Activated CD4-positive, alpha-beta memory T cell treated with anti-CD3 and anti-CD28 coated beads, Interleukin-2, amount 10 ng/mL, durations not matched to agents 7 days and 5 days (primary cell): ENCODE measurements at regions of chr7 and their contacts with region 1.

Region 1: DNA sequence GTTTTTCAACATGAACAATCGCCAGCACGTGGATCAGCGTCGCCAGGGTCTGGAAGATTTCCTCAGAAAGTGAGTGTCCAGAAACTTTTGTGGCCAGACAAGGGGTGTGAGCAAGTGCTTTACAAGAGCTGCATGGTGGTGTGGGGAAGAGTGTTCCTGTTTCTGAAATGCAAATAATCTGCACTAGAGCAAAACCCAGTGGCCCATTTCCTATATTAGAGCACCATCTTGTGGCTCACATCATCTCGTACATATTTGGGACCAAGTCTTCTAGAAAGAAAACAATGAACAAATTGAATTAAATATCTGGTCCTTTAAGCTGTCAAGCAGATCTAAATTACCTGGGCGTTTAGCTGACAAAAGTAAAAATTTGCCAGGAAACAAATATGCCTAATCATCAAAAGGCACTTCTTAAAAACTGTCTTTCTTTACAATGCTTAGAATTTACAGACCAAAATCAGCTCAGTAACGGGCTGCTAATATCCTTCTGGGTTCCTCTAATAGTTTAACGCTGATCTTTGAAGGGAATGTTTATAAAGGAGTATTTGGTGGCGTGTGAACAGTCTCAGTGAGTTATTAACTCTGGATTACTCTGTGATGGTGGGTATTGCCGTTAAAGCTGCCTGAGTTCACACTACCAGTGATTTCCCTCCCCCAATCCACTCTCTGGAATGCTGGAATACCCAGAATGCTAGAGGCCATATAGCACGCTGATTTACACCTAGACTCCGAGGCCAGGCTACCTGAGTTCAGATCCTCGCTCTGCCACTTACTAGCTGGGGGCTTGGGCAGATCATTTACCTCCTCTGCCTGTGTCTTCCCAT is 73.6 kb downstream of the SNX10 start:
- DNase-seq: peak; percentile 58
- H3K4me3 Mint-ChIP-seq: no peak overlapping the region
- H3K27ac Mint-ChIP-seq: no peak overlapping the region
- H3K4me1 Mint-ChIP-seq: peaks cover 17% of the 10 kb centered on the region
- H3K27me3 Mint-ChIP-seq: no peaks in the 10 kb centered on the region

Region 2: GRCh38 chr7:26078437-26079336 is 286.6 kb before region 1 on chr7:
- CTCF ChIA-PET with region 1: interaction called, 15 read pairs
- POLR2A ChIA-PET with region 1: no interaction called
- DNase-seq: peak; percentile 73
- H3K4me3 Mint-ChIP-seq: no peak overlapping the region
- H3K27ac Mint-ChIP-seq: no peak overlapping the region
- H3K4me1 Mint-ChIP-seq: peaks cover 5% of the 10 kb centered on the region
- H3K27me3 Mint-ChIP-seq: peaks cover 71% of the 10 kb centered on the region

Region 3: DNA sequence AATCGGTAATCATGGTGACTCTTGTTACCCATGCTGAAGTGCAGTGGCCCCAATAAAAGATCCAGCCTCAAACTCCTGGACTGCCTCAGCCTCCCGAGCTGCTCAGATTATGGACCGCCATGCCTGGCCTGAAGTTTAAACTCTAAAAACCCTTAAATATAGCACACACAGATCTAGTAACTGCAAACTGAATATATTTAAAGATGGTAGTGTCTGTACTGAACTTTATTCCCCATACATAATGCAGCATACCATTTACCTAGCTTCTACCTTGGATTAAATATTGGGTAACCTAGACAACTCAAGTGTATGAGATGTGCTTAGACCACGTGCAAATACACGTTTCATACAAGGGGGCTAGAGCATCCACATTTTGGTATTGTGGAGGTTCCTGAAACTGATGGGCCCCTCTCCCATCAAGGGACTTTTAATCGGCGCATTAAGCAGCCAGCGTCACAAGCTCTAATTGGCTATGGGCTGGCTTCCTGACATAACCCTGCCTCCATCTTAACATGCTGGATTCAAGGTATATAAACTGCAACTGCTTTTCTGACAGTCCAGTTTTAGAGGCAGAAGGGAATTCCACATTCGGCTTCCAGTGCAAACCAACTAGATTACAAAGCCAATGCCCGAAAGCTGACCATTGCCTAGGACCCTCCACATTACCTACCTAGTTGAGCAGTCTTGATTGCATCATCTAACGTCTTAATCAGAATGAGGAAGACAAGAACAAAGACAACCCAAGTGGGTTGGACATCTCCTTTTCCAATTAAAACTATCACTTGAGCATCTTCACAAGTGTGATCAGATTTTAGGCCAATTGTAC is 177.7 kb before region 1 on chr7:
- CTCF ChIA-PET with region 1: interaction called, 20 read pairs
- POLR2A ChIA-PET with region 1: interaction called, 12 read pairs
- DNase-seq: no peak
- H3K4me3 Mint-ChIP-seq: no peak overlapping the region
- H3K27ac Mint-ChIP-seq: peak overlapping the region; percentile 63
- H3K4me1 Mint-ChIP-seq: peaks cover 78% of the 10 kb centered on the region
- H3K27me3 Mint-ChIP-seq: no peaks in the 10 kb centered on the region

Region 4: DNA sequence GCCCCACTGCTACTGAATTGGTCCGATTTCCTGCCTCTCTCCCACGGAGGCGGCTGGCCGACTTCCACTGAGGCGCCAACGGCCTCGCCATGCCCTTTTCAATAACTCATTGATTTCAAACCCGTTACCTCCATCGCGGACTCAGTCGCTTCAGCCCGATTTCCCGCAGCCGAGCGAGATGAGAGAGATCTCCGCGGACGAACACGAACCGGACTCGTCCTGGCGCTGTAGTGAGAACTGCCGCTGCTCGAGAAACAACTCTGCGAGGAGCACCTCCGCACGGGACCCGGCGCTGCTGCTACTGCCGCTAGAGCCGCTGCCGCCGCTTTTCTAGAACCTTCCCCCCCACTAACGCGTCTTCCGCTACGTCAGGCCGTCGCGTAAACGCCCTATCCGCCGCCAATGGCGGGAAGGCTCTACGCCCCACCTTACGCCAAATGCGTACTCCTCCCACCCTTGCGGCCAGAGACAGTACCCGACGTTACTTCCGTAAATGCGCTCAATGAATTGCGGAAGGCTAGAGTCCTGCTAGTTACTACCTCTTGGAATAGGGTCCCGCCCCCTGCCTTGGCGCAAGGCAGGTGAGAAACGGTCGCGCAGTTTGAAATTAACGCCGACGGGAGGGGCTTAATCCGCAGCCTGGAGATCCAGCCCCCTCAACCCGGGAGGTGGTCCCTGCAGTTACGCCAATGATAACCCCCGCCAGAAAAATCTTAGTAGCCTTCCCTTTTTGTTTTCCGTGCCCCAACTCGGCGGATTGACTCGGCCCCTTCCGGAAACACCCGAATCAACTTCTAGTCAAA is 164.6 kb before region 1 on chr7 and contains the start of gene HNRNPA2B1:
- CTCF ChIA-PET with region 1: interaction called, 18 read pairs
- POLR2A ChIA-PET with region 1: interaction called, 17 read pairs
- DNase-seq: peak; percentile 98
- H3K4me3 Mint-ChIP-seq: peak within 1 kb of the TSS; percentile 94
- H3K27ac Mint-ChIP-seq: peak within 1 kb of the TSS; percentile 98
- H3K4me1 Mint-ChIP-seq: peaks cover 41% of the 10 kb centered on the region
- H3K27me3 Mint-ChIP-seq: no peaks in the 10 kb centered on the region
- total RNA-seq, gene HNRNPA2B1: 696 to 705 TPM

Region 5: DNA sequence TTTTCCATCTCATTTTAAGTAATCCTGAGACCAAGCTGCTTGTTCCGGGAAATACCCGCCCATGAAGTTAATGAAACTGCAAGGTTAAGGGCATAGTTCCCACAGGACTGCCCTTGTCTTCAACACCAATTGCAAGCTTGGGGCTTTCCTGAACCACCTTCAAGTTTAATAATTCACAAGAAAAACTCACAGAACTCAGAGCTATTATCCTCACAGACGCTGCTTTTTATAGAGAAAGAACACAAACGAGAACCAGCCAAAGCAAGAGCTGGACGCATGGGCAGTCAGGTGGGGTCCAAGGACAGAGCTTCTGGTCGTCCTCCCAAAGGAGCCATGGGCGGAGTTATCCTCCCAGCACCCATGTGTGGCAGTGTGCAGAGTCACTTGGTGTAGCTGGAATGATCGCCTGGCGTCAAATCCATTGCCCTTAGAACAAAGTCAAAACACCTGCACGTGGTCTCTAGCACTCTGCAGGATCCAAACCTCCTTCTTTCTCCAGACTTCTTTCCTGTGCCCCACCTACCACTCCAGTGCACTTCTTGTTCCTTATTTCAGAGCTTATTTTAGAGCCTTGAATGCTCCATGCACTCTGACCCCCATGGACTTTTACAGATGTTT is 16.9 kb before region 1 on chr7:
- CTCF ChIA-PET with region 1: interaction called, 14 read pairs
- POLR2A ChIA-PET with region 1: no interaction called
- DNase-seq: no peak
- H3K4me3 Mint-ChIP-seq: no peak overlapping the region
- H3K27ac Mint-ChIP-seq: no peak overlapping the region
- H3K4me1 Mint-ChIP-seq: no peaks in the 10 kb centered on the region
- H3K27me3 Mint-ChIP-seq: no peaks in the 10 kb centered on the region

Region 6: GRCh38 chr7:26667500-26668133 is 302.3 kb after region 1 on chr7:
- CTCF ChIA-PET with region 1: interaction called, 47 read pairs
- POLR2A ChIA-PET with region 1: interaction called, 4 read pairs
- DNase-seq: peak; percentile 66
- H3K4me3 Mint-ChIP-seq: no peak overlapping the region
- H3K27ac Mint-ChIP-seq: no peak overlapping the region
- H3K4me1 Mint-ChIP-seq: peaks cover 15% of the 10 kb centered on the region
- H3K27me3 Mint-ChIP-seq: peaks cover 26% of the 10 kb centered on the region